Activated naive CD4-positive, alpha-beta T cell treated with anti-CD3 and anti-CD28 coated beads for 36 hours (primary cell): ENCODE measurements at regions of chr3 and their contacts with region 1.

Region 1: DNA sequence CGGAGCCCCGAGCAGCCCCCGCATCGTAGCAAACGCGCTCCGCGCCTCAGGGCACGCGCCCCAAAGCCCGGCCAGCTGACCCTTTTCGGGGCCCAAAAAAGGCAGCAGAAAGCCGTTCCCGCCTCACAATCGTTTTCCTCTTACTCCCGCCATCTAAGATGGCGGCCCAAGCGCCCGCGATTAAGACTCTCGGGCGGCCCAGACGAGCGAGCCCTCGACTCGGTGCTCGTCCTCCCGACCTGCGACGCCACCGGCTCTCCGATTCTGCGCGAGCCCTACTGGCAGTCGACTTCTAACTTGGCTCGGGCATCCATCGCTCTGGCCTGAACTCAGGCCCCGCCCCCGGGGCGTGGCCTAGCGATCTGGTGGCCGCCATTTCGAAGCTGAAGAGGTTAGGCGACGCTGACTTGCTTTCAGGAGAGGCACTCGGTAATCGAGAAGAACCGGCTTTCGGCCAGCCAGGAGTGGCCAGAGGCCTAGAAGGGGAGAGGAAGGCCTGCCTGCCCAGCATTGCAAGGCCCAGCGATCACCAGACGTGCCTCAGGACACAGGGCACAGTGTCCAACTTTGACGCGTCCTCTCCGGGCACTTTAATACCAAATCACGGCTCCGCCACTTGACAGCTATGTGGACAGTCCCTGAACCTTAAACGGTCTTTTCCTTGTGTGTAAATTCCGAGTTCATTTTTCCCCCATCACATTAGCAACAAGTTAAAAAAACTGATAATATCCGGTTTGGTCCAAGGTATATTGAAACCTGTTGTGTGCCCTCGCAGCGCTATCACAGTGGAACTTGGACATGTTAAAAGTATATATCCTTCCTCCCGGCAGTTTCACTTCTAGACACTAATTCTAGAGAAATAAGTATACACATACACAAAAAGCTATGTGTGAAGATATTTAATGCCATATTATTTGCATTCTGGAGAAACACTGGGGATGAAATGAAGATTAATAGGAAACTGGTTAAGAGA is at the start of gene RAF1:
- DNase-seq: peak; percentile 98
- H3K4me3 Mint-ChIP-seq: peak within 1 kb of the TSS; percentile 82
- H3K27ac Mint-ChIP-seq: peak within 1 kb of the TSS; percentile 98
- H3K4me1 Mint-ChIP-seq: peaks cover 28% of the 10 kb centered on the region
- H3K27me3 Mint-ChIP-seq: no peaks in the 10 kb centered on the region
- total RNA-seq, gene RAF1: 62.5 to 68.5 TPM

Region 2: DNA sequence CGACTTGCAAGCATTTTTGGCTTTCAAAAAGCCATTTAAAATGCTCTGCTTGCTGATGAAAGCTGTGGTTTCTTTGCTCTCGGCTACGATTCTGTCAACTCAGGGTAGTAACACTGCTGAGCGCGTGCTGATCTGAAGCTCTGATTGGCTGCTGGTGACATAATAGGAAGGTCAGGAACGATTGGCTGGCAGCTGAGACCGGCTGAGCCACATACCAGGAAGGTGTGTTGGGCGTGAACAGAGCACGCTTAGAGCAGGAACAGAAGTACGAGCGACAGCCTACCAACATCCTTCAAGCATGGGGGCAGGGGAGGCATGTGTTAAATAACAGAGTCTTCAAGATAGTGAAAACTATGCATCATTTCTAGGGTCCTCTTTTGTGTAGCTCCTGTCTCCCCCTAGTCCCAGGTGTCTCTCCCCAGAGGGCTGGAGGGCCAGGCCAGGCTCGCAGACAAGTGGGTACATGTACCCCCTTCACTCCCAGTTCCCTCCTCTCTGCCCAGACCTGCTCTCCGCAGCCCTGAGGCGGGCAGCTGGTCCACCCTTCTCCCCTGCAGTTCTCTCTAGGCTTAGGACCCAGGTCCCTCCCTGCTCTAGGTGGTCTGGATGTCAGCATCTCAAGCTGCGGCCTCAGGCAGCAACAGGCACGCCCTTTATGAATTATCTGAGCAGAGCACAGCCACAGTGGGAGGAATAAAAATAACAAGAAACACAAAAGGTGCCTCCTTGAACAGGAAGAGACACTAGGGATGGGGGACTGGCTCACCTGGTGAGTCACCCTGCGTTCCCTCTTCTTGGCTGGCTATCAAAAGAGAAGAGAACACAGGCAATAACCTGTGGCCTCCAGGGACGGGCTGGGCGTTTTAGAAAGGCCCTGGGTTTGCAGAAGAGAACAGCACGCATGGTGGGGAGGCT is 893.5 kb before region 1 on chr3:
- CTCF ChIA-PET with region 1: no interaction called
- intact Hi-C with region 1: loop called (anchors 1 kb)
- DNase-seq: peak; percentile 91
- H3K4me3 Mint-ChIP-seq: peak overlapping the region; percentile 10
- H3K27ac Mint-ChIP-seq: peak overlapping the region; percentile 71
- H3K4me1 Mint-ChIP-seq: peaks cover 18% of the 10 kb centered on the region
- H3K27me3 Mint-ChIP-seq: no peaks in the 10 kb centered on the region

Region 3: GRCh38 chr3:12556671-12557472 is 107.3 kb before region 1 on chr3 and contains the start of gene MKRN2:
- CTCF ChIA-PET with region 1: no interaction called
- intact Hi-C with region 1: loop called (anchors 1 kb)
- DNase-seq: peak; percentile 83
- H3K4me3 Mint-ChIP-seq: peak within 1 kb of the TSS; percentile 78
- H3K27ac Mint-ChIP-seq: peak within 1 kb of the TSS; percentile 88
- H3K4me1 Mint-ChIP-seq: peaks cover 48% of the 10 kb centered on the region
- H3K27me3 Mint-ChIP-seq: peaks cover 24% of the 10 kb centered on the region
- total RNA-seq, gene MKRN2: 32.9 to 34.5 TPM

Region 4: DNA sequence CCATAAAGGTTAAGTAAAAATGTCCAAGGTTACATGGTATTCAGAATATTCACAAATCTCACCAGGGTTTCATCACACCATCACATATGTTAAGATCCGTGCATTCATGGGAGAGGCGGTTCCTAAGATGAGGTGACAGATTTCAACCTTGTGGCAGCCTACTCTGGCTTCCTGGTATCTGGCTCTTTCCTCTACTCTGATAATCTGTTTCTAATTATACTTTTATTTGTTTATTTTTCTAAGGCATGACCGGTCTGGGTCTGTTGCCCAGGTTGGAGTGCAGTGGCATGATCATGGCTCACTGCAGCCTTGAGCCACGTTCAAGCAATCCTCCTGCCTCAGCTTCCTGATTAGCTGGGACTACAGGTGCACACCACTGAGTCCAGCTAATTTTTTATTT is 34.7 kb before region 1 on chr3:
- CTCF ChIA-PET with region 1: interaction called, 3 read pairs
- intact Hi-C with region 1: loop called (anchors 5 kb)
- DNase-seq: no peak
- H3K4me3 Mint-ChIP-seq: no peak overlapping the region
- H3K27ac Mint-ChIP-seq: no peak overlapping the region
- H3K4me1 Mint-ChIP-seq: peaks cover 56% of the 10 kb centered on the region
- H3K27me3 Mint-ChIP-seq: no peaks in the 10 kb centered on the region

Region 5: GRCh38 chr3:12967606-12968351 is 303.6 kb after region 1 on chr3:
- CTCF ChIA-PET with region 1: no interaction called
- intact Hi-C with region 1: loop called (anchors 10 kb)
- DNase-seq: peak; percentile 89
- H3K4me3 Mint-ChIP-seq: peak overlapping the region; percentile 59
- H3K27ac Mint-ChIP-seq: no peak overlapping the region
- H3K4me1 Mint-ChIP-seq: peaks cover 51% of the 10 kb centered on the region
- H3K27me3 Mint-ChIP-seq: no peaks in the 10 kb centered on the region

Region 6: GRCh38 chr3:13419505-13420044 is 755.4 kb after region 1 on chr3:
- CTCF ChIA-PET with region 1: no interaction called
- intact Hi-C with region 1: loop called (anchors 5 kb)
- DNase-seq: peak; percentile 52
- H3K4me3 Mint-ChIP-seq: peak overlapping the region; percentile 92
- H3K27ac Mint-ChIP-seq: peak overlapping the region; percentile 93
- H3K4me1 Mint-ChIP-seq: peaks cover 70% of the 10 kb centered on the region
- H3K27me3 Mint-ChIP-seq: no peaks in the 10 kb centered on the region